Transverse colon (tissue), 4 donors: ENCODE measurements at regions of chr11 and their contacts with region 1.

Region 1: DNA sequence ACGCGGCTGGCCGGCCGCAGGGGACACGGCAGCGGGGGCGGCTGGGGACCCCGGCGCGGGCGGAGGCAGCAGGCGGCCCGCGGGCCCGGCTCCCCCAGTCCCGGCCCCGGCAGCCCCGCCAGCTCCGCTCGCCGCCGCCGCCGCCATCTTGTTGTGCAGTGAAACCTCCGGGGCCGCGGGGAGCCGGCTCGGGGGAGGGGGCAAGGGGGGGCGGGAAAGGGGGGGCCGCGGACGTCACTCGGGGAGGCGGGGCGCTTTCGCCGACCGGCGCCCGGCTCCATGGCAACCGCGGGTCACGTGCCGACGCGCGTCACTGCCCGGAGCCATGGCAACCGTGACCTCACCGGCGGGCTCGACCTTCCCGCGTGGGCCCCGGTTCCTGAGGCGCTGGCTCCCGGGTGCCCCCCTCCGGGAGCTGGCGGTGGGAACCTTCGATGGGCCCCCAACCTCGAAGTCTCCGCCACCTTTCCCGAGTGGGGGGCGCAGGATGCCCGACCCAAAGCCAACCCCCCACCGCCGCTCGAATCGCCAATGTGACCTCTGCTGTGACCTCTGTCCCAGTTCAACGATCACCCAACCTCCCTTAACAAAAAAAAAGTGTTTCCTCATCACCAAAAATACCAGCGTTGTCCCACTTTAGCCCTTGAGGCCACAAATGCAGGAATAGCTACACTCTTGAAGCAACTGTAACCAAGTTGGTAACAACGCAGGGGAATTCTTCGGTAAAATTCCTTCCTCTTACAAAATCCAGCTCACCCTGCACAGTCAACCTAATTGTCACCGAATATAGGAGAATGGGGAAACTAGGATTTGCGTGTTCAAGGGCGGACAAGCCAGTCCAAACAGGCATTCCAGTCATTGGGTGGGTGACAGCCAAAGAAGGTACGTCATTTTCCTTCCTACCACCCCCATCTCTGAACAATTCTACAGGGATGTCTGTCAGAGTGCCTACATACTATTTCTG is at the start of gene SIK3:
- DNase-seq: peak; percentile 96
- H3K4me3 ChIP-seq: peak within 1 kb of the TSS; percentile 48 to 99 (median 82)
- H3K27ac ChIP-seq: peak within 1 kb of the TSS; percentile 90 to 98 (median 96)
- H3K4me1 ChIP-seq: peaks cover 19 to 42% (median 33%) of the 10 kb centered on the region in 4 donors
- H3K27me3 ChIP-seq: no peaks in the 10 kb centered on the region
- CTCF ChIP-seq: peak in 3 of 5 experiments; percentile 14 to 35 (median 25)
- EP300 ChIP-seq: peak; percentile 10
- POLR2A ChIP-seq: peak; percentile 66
- total RNA-seq, gene SIK3: 35.6 to 68.6 (median 38.9) TPM

Region 2: DNA sequence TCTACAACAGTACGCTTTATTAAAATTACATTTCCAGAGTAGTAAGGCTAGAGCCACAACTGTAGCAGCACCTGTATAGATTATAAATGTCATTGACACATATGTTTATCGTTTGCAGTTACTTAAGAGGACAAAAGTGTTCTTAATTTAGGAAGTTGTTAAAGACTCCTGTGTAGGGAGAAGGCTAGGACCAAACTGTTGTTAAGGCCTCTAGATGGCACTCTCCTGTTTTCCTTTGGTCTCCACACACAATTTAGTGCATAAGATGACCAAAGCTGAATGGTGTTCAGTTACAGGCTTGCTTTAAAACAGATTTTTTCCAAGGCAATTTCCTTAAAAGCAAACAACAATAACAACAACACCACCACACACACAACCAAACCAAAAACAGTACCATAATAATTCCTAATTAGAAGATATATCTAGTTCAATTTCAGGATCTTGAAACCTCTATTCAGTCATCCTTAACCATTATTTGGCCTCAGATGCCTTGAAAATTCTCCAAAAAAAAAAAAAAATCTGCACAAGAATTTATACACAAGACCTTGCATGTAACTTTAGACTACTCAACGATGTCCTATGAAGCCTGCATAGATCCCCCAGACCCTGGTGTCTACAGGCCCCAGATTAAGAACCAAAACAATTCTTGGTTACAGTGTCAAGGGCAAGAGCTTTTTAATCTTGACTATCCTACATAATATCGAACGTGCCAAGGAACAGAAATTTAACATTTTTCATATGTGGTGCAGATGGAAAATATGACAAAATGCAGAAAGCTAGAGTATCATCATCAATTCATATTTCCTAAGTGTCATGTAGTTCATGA is 218.5 kb before region 1 on chr11:
- in situ Hi-C with region 1: loop called in 2 of 4 experiments (anchors 5 to 10 kb)
- intact Hi-C with region 1: no loop called
- DNase-seq: no peak
- H3K4me3 ChIP-seq: no peak overlapping the region
- H3K27ac ChIP-seq: no peak overlapping the region
- H3K4me1 ChIP-seq: peaks cover 0 to 5% (median 0%) of the 10 kb centered on the region in 4 donors
- H3K27me3 ChIP-seq: no peaks in the 10 kb centered on the region
- CTCF ChIP-seq: peak; percentile 56 to 61 (median 60)
- EP300 ChIP-seq: no peak
- POLR2A ChIP-seq: no peak

Region 3: DNA sequence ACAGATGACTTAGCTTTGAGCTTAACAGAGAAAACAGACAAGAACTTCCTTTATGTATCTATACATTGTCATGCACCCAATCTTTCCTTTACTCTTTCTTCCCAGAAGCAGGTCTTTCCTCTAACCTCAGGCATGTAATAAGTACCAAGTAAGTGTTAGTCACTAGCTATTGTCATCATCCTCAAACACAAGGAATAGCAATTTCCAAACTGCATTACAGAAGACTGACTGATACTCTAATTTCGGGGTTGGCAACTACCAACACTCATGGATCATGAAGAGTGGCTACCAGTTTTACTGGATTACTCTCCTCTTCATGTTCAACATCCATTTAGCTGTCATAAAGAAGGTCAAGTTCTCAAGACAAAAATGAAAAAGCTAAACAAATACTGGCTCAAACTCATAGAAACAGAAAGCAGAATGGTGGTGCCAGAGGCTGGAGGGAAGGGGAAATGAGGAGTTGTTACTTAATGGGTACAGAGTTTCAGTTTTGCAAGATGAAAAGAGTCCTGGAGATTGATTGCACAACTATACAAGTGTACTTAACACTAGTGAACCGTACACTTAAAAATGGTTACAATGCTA is 111.9 kb before region 1 on chr11:
- in situ Hi-C with region 1: loop called in 1 of 4 experiments (anchors 25 kb)
- intact Hi-C with region 1: no loop called
- DNase-seq: no peak
- H3K4me3 ChIP-seq: no peak overlapping the region
- H3K27ac ChIP-seq: peak overlapping the region; percentile 66 to 81 (median 68)
- H3K4me1 ChIP-seq: peaks cover 28 to 63% (median 31%) of the 10 kb centered on the region in 4 donors
- H3K27me3 ChIP-seq: no peaks in the 10 kb centered on the region
- CTCF ChIP-seq: no peak
- EP300 ChIP-seq: no peak
- POLR2A ChIP-seq: no peak

Region 4: DNA sequence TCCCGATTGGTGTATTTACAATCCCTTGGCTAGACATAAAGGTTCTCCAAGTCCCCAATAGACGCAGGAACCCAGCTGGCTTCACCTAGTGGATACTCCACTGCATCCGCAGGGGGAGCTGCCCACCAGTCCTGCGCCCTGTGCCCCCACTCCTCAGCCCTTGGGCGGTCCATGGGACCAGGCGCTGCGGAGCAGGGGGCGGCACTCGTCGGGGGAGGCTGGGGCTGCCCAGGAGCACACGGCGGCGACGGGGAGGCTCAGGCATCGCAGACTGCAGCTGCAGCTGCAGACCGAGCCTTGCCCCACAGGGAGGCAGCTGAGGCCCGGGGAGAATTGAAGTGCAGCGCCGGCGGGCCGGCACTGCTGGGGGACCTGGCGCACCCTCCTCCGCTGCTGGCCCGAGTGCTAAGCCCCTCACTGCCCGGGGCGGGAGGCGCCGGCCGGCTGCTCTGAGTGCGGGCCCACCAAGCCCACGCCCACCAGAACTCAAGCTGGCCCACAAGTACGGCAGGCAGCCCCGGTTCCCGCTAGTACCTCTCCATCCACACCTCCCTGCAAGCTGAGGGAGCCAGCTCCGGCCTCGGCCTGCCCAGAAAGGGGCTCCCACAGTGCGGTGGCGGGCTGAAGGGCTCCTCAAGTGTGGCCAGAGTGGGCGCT is 11.9 kb after region 1 on chr11:
- in situ Hi-C with region 1: no loop called
- intact Hi-C with region 1: no loop called
- DNase-seq: no peak
- H3K4me3 ChIP-seq: no peak overlapping the region
- H3K27ac ChIP-seq: no peak overlapping the region
- H3K4me1 ChIP-seq: peaks cover 0 to 4% (median 1%) of the 10 kb centered on the region in 4 donors
- H3K27me3 ChIP-seq: no peaks in the 10 kb centered on the region
- CTCF ChIP-seq: no peak
- EP300 ChIP-seq: no peak
- POLR2A ChIP-seq: no peak

Region 5: DNA sequence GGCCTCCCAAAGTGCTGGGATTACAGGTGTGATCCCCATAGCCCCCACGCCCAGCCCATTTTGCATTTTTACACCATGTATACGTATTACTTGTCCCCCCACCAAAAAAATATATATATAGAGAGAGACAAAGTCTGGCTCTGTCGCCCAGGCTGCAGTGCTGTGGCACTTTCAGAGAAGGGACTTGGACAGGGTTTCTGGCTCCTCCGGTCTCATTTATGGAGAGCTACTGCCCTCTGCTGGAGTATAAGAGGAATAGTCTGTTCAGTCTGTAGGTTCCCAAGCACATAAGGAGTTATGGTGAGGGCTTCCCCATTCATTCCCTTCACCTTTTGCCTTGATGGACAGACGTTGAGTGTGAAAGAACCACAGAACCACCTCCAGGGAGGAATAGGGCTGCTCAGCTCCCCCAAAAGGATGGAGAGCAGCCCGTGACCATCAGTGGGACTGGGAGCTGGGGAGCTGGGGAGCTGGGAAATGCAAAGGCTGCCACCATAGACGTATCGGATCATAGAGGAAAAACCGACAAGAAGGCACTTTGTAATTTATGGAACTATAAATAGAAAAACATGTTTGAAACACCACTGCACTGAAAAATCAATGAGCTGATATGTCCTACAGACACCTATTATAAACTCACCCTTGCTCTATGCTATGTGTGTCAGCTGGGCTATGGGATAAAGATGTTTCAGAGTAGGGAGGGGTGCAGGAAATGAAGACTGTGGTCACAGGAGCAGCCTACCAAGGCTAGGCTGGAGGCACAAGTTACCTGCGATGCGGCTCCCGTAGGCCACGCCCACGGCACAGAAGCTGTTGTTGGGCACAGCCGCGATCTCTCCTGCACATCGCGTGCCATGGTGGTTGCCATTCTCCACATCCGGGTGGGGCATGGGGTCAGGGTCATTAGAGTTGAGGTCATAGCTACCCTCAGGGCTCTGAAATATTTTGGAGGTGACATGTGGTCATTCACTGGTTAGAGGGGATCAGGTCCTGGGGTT is 128.1 kb after region 1 on chr11:
- in situ Hi-C with region 1: no loop called
- intact Hi-C with region 1: no loop called
- DNase-seq: peak; percentile 54
- H3K4me3 ChIP-seq: no peak overlapping the region
- H3K27ac ChIP-seq: peak overlapping the region; percentile 83 to 91 (median 86)
- H3K4me1 ChIP-seq: peaks cover 27 to 71% (median 58%) of the 10 kb centered on the region in 4 donors
- H3K27me3 ChIP-seq: no peaks in the 10 kb centered on the region
- CTCF ChIP-seq: peak; percentile 76 to 91 (median 81)
- EP300 ChIP-seq: no peak
- POLR2A ChIP-seq: no peak